ENCODE measurements at regions of chr11 and their contacts with region 1.

Region 1: DNA sequence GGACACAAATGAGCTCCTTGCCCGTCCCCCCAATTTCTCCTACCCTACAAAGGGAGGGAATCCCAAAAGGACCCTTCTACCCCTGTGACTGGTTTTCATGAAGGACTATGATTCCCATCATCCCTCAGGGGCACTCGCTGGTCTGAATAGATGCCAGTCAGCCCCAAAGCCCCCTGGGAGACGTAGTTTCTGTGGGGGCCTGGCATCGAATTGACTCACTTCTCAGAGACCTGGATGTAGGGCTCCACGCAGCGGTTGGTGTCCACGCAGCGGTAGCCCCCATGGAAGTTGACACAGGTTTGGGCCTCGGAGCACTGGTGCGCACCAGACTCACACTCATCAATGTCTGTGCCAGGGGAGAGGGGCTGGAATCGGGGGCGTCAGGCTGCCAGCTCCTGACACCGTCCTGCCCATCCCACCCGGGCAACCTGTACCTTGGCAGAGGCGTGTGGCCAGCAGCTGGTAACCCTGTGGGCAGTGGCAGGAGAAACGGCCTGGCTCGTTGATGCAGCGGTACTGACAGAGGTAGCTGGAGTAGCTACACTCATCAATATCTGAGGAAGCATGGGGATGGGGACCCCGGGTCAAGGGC is 4.4 kb downstream of the EFEMP2 start:
- DNase-seq: peak; percentile 52 to 78
- ATAC-seq: no peak
- H3K4me3 ChIP-seq: no peak overlapping the region
- H3K27ac ChIP-seq: no peak overlapping the region
- H3K4me1 ChIP-seq: no peaks in the 10 kb centered on the region
- H3K27me3 ChIP-seq: no peaks in the 10 kb centered on the region

Region 2: GRCh38 chr11:65968600-65969482 is 100.7 kb after region 1 on chr11:
- intact Hi-C with region 1: loop called in 1 of 2 experiments (anchors 5 kb)
- DNase-seq: no peak
- ATAC-seq: peak; percentile 23
- H3K4me3 ChIP-seq: no peak overlapping the region
- H3K27ac ChIP-seq: no peak overlapping the region
- H3K4me1 ChIP-seq: no peaks in the 10 kb centered on the region
- H3K27me3 ChIP-seq: no peaks in the 10 kb centered on the region

Region 3: GRCh38 chr11:66136752-66137123 is 268.6 kb after region 1 on chr11:
- intact Hi-C with region 1: no loop called
- DNase-seq: no peak
- ATAC-seq: no peak
- H3K4me3 ChIP-seq: no peak overlapping the region
- H3K27ac ChIP-seq: no peak overlapping the region
- H3K4me1 ChIP-seq: peaks cover 2 to 5% of the 10 kb centered on the region in 2 donors
- H3K27me3 ChIP-seq: no peaks in the 10 kb centered on the region